Right ventricle myocardium inferior (tissue), 1 donor: ENCODE measurements at regions of chr2 and their contacts with region 1.

Region 1: GRCh38 chr2:210617732-210618330 is 61.4 kb downstream of the CPS1 start:
- DNase-seq: no peak
- ATAC-seq: no peak

Region 2: GRCh38 chr2:211157856-211158463 is 540.1 kb after region 1 on chr2:
- intact Hi-C with region 1: loop called (anchors 5 kb)
- DNase-seq: peak; percentile 75
- ATAC-seq: peak; percentile 59